Common myeloid progenitor, CD34-positive (primary cell): ENCODE measurements at regions of chr17 and their contacts with region 1.

Region 1: GRCh38 chr17:28871056-28871579 is 16.3 kb downstream of the ERAL1 start:
- DNase-seq: peak in 2 of 3 donors; percentile 35 to 39
- H3K4me3 ChIP-seq: peak overlapping the region in 1 of 7 experiments; percentile 4
- H3K27ac ChIP-seq: peak overlapping the region in 1 of 2 experiments; percentile 53
- H3K4me1 ChIP-seq: peaks cover 2 to 10% (median 7%) of the 10 kb centered on the region in 4 experiments
- H3K27me3 ChIP-seq: no peaks in the 10 kb centered on the region

Region 2: GRCh38 chr17:28885363-28885762 is 14.2 kb after region 1 on chr17:
- CTCF ChIA-PET with region 1: interaction called, 12 read pairs
- POLR2A ChIA-PET with region 1: no interaction called
- DNase-seq: no peak
- H3K4me3 ChIP-seq: no peak overlapping the region
- H3K27ac ChIP-seq: peak overlapping the region in 1 of 2 experiments; percentile 16
- H3K4me1 ChIP-seq: peaks cover 0 to 6% (median 3%) of the 10 kb centered on the region in 4 experiments
- H3K27me3 ChIP-seq: no peaks in the 10 kb centered on the region

Region 3: DNA sequence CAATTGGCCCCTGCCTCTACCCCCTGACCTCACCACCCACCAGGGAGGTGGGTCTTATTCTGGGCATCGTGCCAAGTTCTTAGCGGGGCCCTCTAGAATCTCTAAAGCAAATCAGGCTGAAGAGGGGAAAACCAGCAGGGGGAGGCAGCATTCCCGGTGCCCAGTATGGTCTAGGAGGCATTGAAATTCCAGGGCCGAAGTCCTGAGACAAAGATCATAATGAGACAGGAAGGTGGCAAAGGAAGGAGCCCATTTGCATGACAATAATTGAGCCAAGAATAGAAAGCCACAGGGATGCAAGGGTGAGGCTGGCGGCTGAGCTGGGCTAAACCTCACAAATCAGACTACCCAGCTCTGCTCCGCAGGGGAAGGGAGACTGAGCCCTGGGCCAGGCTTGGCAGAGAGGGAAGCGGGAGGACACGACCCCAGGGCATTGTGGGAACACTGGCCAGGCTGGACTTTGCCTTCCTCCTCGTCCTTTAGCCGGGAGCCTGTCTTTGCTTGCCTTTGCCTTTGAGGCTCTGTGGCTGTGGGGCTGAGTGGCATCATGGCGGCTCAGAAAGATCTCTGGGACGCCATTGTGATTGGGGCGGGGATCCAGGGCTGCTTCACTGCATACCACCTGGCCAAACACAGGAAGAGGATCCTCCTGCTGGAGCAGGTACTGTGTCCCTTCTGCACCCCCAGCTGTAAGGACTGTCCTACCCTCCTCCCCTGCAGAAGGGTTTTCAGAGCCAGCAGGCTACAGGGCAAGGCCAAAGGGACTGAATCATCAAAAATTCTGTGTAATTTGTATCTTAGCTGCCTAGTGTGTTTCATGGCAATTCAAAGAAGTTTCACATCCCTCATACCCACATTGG is 171.8 kb after region 1 on chr17 and contains the start of gene PIPOX:
- CTCF ChIA-PET with region 1: no interaction called
- POLR2A ChIA-PET with region 1: no interaction called
- DNase-seq: peak; percentile 51 to 72 (median 72)
- H3K4me3 ChIP-seq: peak within 1 kb of the TSS in 4 of 7 experiments; percentile 26 to 58 (median 42)
- H3K27ac ChIP-seq: no peak within 1 kb of the TSS
- H3K4me1 ChIP-seq: peaks cover 0 to 14% (median 12%) of the 10 kb centered on the region in 4 experiments
- H3K27me3 ChIP-seq: peaks cover 0 to 8% (median 4%) of the 10 kb centered on the region in 5 experiments